SK-N-SH (cell line): ENCODE measurements at regions of chr1 and their contacts with region 1.

Region 1: GRCh38 chr1:158124999-158125398 is 55.7 kb upstream of the CD1D start:
- DNase-seq: peak; percentile 74
- H3K4me3 ChIP-seq: peak overlapping the region in 1 of 2 experiments; percentile 28; a peak in 1 of 4 replicates
- H3K27ac ChIP-seq: no peak overlapping the region
- H3K4me1 ChIP-seq: peaks cover 0 to 12% of the 10 kb centered on the region in 2 experiments; a peak in 1 of 4 replicates
- H3K27me3 ChIP-seq: peaks cover 27% of the 10 kb centered on the region
- CTCF ChIP-seq: peak; percentile 99
- EP300 ChIP-seq: no peak
- RAD21 ChIP-seq: peak; percentile 96

Region 2: GRCh38 chr1:157580179-157580827 is 544.7 kb before region 1 on chr1:
- CTCF ChIA-PET with region 1: interaction called, 10 read pairs
- POLR2A ChIA-PET with region 1: interaction called, 3 read pairs
- DNase-seq: peak; percentile 21
- H3K4me3 ChIP-seq: peak overlapping the region in 1 of 2 experiments; percentile 26; a peak in 1 of 4 replicates
- H3K27ac ChIP-seq: no peak overlapping the region
- H3K4me1 ChIP-seq: no peaks in the 10 kb centered on the region
- H3K27me3 ChIP-seq: peaks cover 7% of the 10 kb centered on the region; the same call in 1 of the 2 replicates
- CTCF ChIP-seq: peak; percentile 81
- EP300 ChIP-seq: no peak
- RAD21 ChIP-seq: peak; percentile 52

Region 3: GRCh38 chr1:157963713-157964112 is 161.3 kb before region 1 on chr1:
- CTCF ChIA-PET with region 1: interaction called, 48 read pairs
- POLR2A ChIA-PET with region 1: no interaction called
- DNase-seq: peak; percentile 63
- H3K4me3 ChIP-seq: peak overlapping the region in 1 of 2 experiments; percentile 40; a peak in 2 of 4 replicates
- H3K27ac ChIP-seq: no peak overlapping the region
- H3K4me1 ChIP-seq: peaks cover 5 to 21% of the 10 kb centered on the region in 2 experiments; a peak in 3 of 4 replicates
- H3K27me3 ChIP-seq: peaks cover 26% of the 10 kb centered on the region
- CTCF ChIP-seq: peak; percentile 98
- EP300 ChIP-seq: no peak
- RAD21 ChIP-seq: peak; percentile 81

Region 4: DNA sequence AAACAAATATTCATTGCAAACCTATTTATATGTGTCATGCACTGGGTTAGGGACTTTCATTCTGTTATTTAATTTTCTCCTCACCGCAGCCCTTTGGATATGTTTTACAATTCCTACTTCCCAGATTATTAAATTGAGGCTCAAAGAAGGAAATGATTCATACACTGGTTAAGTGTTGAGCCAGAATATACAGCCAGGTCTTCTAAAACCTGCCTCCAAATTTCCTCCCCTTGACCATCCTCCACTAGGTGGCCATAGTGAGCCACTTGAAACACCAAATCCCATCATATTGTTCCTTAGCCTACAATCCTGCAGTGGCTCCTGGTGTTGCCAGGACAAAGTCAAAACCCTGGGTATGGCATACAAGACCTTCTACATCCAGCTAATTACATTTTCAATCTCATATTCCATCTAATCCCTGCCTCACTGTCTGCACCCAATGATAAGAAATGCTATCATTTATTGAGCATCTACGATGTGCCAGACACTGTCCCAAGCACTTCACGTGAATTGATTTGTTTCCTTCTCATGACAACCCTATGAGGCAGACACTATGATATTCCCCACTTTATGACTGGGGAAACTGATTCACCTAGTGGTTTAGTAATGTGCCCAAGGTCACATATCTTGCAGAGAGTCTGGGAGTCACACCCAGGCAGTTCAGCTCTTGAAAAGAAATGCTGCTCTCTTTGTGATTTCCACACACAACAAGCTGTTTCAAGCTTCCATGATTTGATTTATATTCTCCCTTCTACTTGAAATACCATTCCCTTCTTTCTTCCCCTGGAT is 155.1 kb before region 1 on chr1:
- CTCF ChIA-PET with region 1: interaction called, 48 read pairs
- POLR2A ChIA-PET with region 1: no interaction called
- DNase-seq: peak; percentile 44
- H3K4me3 ChIP-seq: no peak overlapping the region; a peak in 1 of 4 replicates
- H3K27ac ChIP-seq: peak overlapping the region in 1 of 2 experiments; percentile 86; a peak in 2 of 4 replicates
- H3K4me1 ChIP-seq: peaks cover 6 to 23% of the 10 kb centered on the region in 2 experiments; a peak in 3 of 4 replicates
- H3K27me3 ChIP-seq: no peaks in the 10 kb centered on the region
- CTCF ChIP-seq: peak; percentile 96
- EP300 ChIP-seq: no peak
- RAD21 ChIP-seq: peak; percentile 60

Region 5: GRCh38 chr1:157992031-157992832 is 132.8 kb before region 1 on chr1:
- CTCF ChIA-PET with region 1: interaction called, 29 read pairs
- POLR2A ChIA-PET with region 1: no interaction called
- DNase-seq: peak; percentile 63
- H3K4me3 ChIP-seq: peak overlapping the region in 1 of 2 experiments; percentile 10; a peak in 1 of 4 replicates
- H3K27ac ChIP-seq: peak overlapping the region; percentile 20 to 76; a peak in 3 of 4 replicates
- H3K4me1 ChIP-seq: peaks cover 4 to 26% of the 10 kb centered on the region in 2 experiments; a peak in 3 of 4 replicates
- H3K27me3 ChIP-seq: no peaks in the 10 kb centered on the region
- CTCF ChIP-seq: peak; percentile 98
- EP300 ChIP-seq: no peak
- RAD21 ChIP-seq: peak; percentile 83

Region 6: GRCh38 chr1:158087320-158087927 is 37.6 kb before region 1 on chr1:
- CTCF ChIA-PET with region 1: interaction called, 11 read pairs
- POLR2A ChIA-PET with region 1: no interaction called
- DNase-seq: peak; percentile 72
- H3K4me3 ChIP-seq: peak overlapping the region in 1 of 2 experiments; percentile 28; a peak in 1 of 4 replicates
- H3K27ac ChIP-seq: no peak overlapping the region
- H3K4me1 ChIP-seq: no peaks in the 10 kb centered on the region
- H3K27me3 ChIP-seq: no peaks in the 10 kb centered on the region
- CTCF ChIP-seq: peak; percentile 99
- EP300 ChIP-seq: no peak
- RAD21 ChIP-seq: peak; percentile 63

Region 7: DNA sequence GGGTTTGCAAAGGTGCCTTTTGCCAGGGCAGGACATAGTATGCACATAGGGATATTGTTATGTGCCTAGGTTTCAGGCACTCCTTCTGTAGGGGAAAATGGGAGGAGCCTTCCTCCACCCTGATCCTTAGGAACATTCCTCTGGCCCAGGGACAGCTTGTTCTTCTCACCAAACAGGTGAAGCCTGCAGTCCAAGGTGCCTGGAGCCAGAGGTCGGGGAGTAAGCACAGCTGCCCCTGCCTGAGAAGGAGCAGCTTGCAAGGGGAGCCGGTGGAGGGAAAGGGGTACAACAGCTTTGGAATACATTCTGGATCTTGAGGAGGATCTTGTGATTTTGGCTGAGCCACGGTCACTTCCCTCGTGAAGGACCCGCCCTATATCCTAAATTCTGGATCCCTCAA is 26.7 kb before region 1 on chr1:
- CTCF ChIA-PET with region 1: no interaction called
- POLR2A ChIA-PET with region 1: no interaction called
- DNase-seq: no peak
- H3K4me3 ChIP-seq: no peak overlapping the region
- H3K27ac ChIP-seq: no peak overlapping the region
- H3K4me1 ChIP-seq: peaks cover 0 to 10% of the 10 kb centered on the region in 2 experiments; a peak in 1 of 4 replicates
- H3K27me3 ChIP-seq: no peaks in the 10 kb centered on the region
- CTCF ChIP-seq: no peak
- EP300 ChIP-seq: no peak
- RAD21 ChIP-seq: no peak

Region 8: GRCh38 chr1:158140764-158141192 is 15.8 kb after region 1 on chr1:
- CTCF ChIA-PET with region 1: interaction called, 20 read pairs
- POLR2A ChIA-PET with region 1: no interaction called
- DNase-seq: no peak
- H3K4me3 ChIP-seq: no peak overlapping the region
- H3K27ac ChIP-seq: no peak overlapping the region
- H3K4me1 ChIP-seq: no peaks in the 10 kb centered on the region; a peak in 2 of 4 replicates
- H3K27me3 ChIP-seq: no peaks in the 10 kb centered on the region; the same call in 1 of the 2 replicates
- CTCF ChIP-seq: no peak
- EP300 ChIP-seq: no peak
- RAD21 ChIP-seq: no peak

Region 9: GRCh38 chr1:158285756-158286241 is 160.8 kb after region 1 on chr1:
- CTCF ChIA-PET with region 1: no interaction called
- POLR2A ChIA-PET with region 1: no interaction called
- DNase-seq: no peak
- H3K4me3 ChIP-seq: no peak overlapping the region
- H3K27ac ChIP-seq: no peak overlapping the region
- H3K4me1 ChIP-seq: no peaks in the 10 kb centered on the region
- H3K27me3 ChIP-seq: no peaks in the 10 kb centered on the region
- CTCF ChIP-seq: no peak
- EP300 ChIP-seq: no peak
- RAD21 ChIP-seq: no peak